Mammary epithelial cell (primary cell): ENCODE measurements at regions of chr14 and their contacts with region 1.

Region 1: DNA sequence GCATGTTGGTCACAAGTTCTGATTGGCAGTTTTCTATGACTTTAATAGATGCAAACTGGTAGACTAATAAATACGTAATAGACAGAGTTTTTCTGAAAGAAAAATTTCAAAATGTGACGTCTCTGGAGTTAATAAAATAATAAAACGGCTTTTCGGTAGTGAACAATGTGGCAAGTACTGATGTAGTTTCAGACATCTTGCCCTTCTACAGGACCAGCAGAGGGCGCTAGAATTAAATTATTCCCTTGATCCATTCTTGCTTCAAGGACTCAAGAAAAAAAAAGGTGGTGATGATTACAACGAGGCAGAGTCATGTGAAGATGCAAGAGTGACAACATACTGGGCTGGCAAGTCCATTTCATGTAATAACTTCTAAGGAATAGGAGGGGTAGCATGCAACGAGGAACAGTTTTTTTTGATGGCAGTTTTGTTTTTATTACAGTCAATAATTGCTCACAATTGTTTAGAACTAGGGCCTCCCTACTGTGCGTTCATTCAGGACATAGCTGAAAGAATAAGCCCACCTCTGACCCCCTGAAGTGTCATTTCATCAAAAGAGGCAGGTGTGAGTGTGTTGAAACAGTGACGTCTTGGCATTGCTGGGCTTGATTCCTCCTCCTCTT is 101.0 kb upstream of the GZMB start:
- DNase-seq: peak; percentile 54
- H3K4me3 ChIP-seq: no peak overlapping the region
- H3K27ac ChIP-seq: no peak overlapping the region
- H3K4me1 ChIP-seq: no peaks in the 10 kb centered on the region
- H3K27me3 ChIP-seq: no peaks in the 10 kb centered on the region
- CTCF ChIP-seq: peak; percentile 47 to 70

Region 2: DNA sequence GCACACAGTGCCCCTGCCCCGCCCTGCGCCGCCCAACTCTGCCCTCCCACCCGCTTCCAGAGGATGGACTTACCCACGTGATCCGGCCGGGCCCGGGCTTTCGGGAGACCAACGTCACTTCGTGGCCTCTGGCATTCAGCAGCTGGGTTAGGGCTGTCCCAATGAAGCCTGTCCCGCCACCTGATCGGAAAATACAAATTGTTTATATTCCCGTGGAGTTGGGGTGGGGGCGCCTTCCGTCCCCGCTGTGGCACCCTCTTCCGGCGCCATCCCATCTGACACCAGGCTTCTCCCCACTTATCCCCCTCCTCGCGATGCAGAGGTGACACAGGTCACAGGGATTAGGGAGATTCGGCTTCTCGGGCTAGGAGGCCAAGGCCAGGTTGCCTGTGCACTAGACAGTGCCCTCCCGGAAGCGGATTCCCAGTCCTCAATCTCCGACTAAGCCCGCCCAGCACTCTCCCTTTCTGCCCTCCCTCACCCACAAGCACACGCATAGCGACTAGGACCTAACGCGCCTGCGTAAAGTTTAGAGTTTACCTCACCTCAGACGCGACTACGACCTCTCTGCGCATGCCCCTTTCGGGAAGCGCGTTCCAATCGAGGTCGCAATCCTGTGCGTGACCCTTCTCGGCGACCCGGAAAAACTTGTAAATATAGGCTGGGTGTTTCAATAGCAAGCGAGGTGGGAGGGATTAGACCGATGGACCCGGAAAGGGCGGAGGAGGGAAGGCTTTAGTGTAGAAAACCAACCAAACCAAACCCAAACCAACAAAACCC is 292.5 kb before region 1 on chr14 and contains the start of gene SDR39U1:
- CTCF ChIA-PET with region 1: no interaction called
- dilution Hi-C with region 1: no loop called
- in situ Hi-C with region 1: no loop called
- intact Hi-C with region 1: no loop called
- DNase-seq: peak; percentile 98
- H3K4me3 ChIP-seq: peak within 1 kb of the TSS; percentile 60 to 91 (median 76)
- H3K27ac ChIP-seq: peak within 1 kb of the TSS; percentile 95
- H3K4me1 ChIP-seq: peaks cover 6% of the 10 kb centered on the region
- H3K27me3 ChIP-seq: no peaks in the 10 kb centered on the region
- CTCF ChIP-seq: peak in 1 of 2 donors; percentile 14
- total RNA-seq, gene SDR39U1: 8.8 to 39.1 TPM

Region 3: DNA sequence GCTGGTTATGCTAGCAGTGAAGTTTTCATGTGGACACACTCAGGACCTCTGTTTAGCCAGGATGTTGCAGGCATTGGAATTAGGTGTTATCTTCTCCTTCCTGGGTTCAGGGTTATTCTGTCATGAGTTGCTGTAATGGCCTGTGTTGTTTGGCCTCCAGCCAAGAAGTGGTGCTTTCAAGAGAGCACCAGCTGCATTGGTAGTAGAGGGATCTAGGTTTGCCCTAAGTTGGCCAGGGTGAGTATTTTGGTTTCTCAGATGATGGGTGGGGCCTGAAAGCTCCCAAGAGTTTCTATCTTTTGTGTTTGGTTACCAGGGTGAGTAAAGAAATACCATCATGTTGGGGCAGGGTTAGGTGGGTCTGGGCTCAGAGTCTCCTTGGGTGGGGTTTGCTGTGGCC is 122.8 kb before region 1 on chr14:
- CTCF ChIA-PET with region 1: no interaction called
- dilution Hi-C with region 1: no loop called
- in situ Hi-C with region 1: no loop called
- intact Hi-C with region 1: no loop called
- DNase-seq: peak; percentile 87
- H3K4me3 ChIP-seq: no peak overlapping the region
- H3K27ac ChIP-seq: peak overlapping the region; percentile 89
- H3K4me1 ChIP-seq: peaks cover 30% of the 10 kb centered on the region
- H3K27me3 ChIP-seq: no peaks in the 10 kb centered on the region
- CTCF ChIP-seq: no peak

Region 4: GRCh38 chr14:24761141-24761540 is 26.2 kb after region 1 on chr14:
- CTCF ChIA-PET with region 1: no interaction called
- dilution Hi-C with region 1: no loop called
- in situ Hi-C with region 1: no loop called
- intact Hi-C with region 1: no loop called
- DNase-seq: no peak
- H3K4me3 ChIP-seq: no peak overlapping the region
- H3K27ac ChIP-seq: no peak overlapping the region
- H3K4me1 ChIP-seq: no peaks in the 10 kb centered on the region
- H3K27me3 ChIP-seq: no peaks in the 10 kb centered on the region
- CTCF ChIP-seq: no peak

Region 5: GRCh38 chr14:25150934-25151790 is 416.2 kb after region 1 on chr14:
- CTCF ChIA-PET with region 1: no interaction called
- dilution Hi-C with region 1: no loop called
- in situ Hi-C with region 1: no loop called
- intact Hi-C with region 1: loop called (anchors 1 kb)
- DNase-seq: peak; percentile 32
- H3K4me3 ChIP-seq: no peak overlapping the region
- H3K27ac ChIP-seq: no peak overlapping the region
- H3K4me1 ChIP-seq: peaks cover 8% of the 10 kb centered on the region
- H3K27me3 ChIP-seq: no peaks in the 10 kb centered on the region
- CTCF ChIP-seq: peak; percentile 63 to 73

Region 6: GRCh38 chr14:25237845-25238244 is 502.9 kb after region 1 on chr14:
- CTCF ChIA-PET with region 1: no interaction called
- dilution Hi-C with region 1: no loop called
- in situ Hi-C with region 1: no loop called
- intact Hi-C with region 1: loop called (anchors 10 kb)
- DNase-seq: peak; percentile 27
- H3K4me3 ChIP-seq: no peak overlapping the region
- H3K27ac ChIP-seq: no peak overlapping the region
- H3K4me1 ChIP-seq: no peaks in the 10 kb centered on the region
- H3K27me3 ChIP-seq: no peaks in the 10 kb centered on the region
- CTCF ChIP-seq: no peak

Region 7: DNA sequence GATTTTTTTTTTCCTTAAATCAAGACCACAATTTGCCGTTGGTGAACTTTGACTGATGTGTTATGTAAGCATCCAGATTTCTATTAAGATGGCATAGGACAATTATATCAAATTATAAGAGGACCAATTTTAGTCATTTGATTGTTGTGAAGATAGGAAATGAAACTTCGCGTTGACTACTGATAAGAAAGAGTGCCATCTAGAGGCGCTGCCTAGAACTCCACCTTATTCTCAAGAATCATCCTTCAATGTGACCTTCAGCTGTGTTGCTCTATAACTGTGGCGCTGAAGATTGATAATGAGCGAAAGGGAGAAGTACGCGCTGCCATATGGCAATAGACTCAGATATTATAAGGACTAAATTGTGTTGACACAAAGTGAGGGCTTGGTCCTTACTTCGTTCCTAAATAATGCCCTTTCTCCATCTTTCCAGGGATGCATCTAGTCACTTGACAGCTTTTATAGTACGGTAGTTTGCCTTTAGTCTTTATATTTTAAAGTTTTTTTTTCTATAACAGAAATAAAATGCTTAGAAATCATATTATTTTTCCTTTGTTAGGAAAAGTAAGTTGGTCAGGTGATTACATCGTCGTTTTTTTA is 665.7 kb after region 1 on chr14:
- CTCF ChIA-PET with region 1: no interaction called
- dilution Hi-C with region 1: no loop called
- in situ Hi-C with region 1: loop called in 1 of 2 experiments (anchors 25 kb)
- intact Hi-C with region 1: no loop called
- DNase-seq: peak; percentile 18
- H3K4me3 ChIP-seq: no peak overlapping the region
- H3K27ac ChIP-seq: no peak overlapping the region
- H3K4me1 ChIP-seq: no peaks in the 10 kb centered on the region
- H3K27me3 ChIP-seq: no peaks in the 10 kb centered on the region
- CTCF ChIP-seq: peak; percentile 59 to 60